Caco-2 (cell line): ENCODE measurements at regions of chr5 and their contacts with region 1.

Region 1: DNA sequence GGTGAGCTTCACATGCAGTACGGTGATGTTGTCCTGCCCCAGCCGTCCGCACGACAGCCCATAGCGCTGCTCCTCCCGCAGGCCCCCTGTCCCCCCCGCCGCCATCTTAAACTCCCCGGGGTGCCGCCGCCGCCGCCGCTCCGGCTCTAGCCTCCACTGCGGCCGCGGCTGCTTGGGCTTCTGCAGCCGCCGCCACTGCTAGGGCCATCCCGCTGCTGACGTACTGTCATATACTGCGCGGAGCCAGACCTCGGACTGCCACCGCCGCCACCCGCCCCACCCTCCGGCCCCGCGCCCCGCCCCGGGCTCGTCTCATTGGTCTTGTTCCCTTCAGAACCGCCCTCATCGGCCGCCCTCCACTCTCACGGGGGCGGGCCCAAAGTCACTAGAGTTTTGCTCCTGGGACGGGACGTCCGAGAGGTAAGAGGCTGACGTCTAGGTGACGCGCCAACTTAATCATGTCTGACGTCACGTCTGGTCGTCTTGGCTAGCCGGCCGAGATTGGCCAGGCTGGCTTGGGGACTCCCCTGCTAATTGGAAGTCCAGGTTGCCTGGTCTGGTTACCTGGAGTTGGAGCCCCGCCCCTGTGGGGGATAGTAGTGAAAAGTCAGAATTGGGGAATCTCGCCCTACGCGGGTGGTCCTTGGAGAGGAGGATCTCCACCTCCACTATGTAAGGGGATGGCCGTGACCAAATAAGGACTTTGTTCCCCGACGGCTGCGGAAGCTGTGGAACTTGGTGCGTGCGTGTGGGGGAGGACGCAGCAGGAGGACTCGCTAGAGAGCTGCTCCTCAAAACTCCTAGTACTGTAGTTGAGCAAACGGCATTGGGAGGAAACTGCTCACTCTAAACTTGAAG is at the start of gene ELL2:
- DNase-seq: peak; percentile 99 to 100
- H3K4me3 ChIP-seq: peak within 1 kb of the TSS; percentile 99
- H3K4me3 Mint-ChIP-seq: peak within 1 kb of the TSS; percentile 86
- H3K27ac Mint-ChIP-seq: peak within 1 kb of the TSS; percentile 98
- H3K4me1 ChIP-seq: peaks cover 48% of the 10 kb centered on the region
- H3K4me1 Mint-ChIP-seq: peaks cover 37% of the 10 kb centered on the region
- H3K27me3 ChIP-seq: no peaks in the 10 kb centered on the region
- H3K27me3 Mint-ChIP-seq: no peaks in the 10 kb centered on the region
- CTCF ChIP-seq: no peak
- total RNA-seq, gene ELL2: 78.1 and 81.0 TPM in 2 replicates

Region 2: GRCh38 chr5:95646554-95647431 is 315.1 kb before region 1 on chr5 and contains the start of gene RFESD:
- CTCF ChIA-PET with region 1: no interaction called
- POLR2A ChIA-PET with region 1: no interaction called
- intact Hi-C with region 1: loop called (anchors 1 kb)
- DNase-seq: peak; percentile 99
- H3K4me3 ChIP-seq: peak within 1 kb of the TSS; percentile 27
- H3K4me3 Mint-ChIP-seq: peak within 1 kb of the TSS; percentile 82
- H3K27ac Mint-ChIP-seq: peak within 1 kb of the TSS; percentile 89
- H3K4me1 ChIP-seq: peaks cover 8% of the 10 kb centered on the region; the same call in 1 of the 2 replicates
- H3K4me1 Mint-ChIP-seq: peaks cover 7% of the 10 kb centered on the region
- H3K27me3 ChIP-seq: no peaks in the 10 kb centered on the region
- H3K27me3 Mint-ChIP-seq: no peaks in the 10 kb centered on the region
- CTCF ChIP-seq: peak; percentile 12 to 45
- total RNA-seq, gene RFESD: 1.6 and 2.4 TPM in 2 replicates

Region 3: GRCh38 chr5:95892780-95893354 is 69.0 kb before region 1 on chr5:
- CTCF ChIA-PET with region 1: interaction called, 3 read pairs
- POLR2A ChIA-PET with region 1: no interaction called
- intact Hi-C with region 1: loop called (anchors 2 kb)
- DNase-seq: peak; percentile 65 to 72
- H3K4me3 ChIP-seq: no peak overlapping the region
- H3K4me3 Mint-ChIP-seq: no peak overlapping the region
- H3K27ac Mint-ChIP-seq: no peak overlapping the region
- H3K4me1 ChIP-seq: peaks cover 5% of the 10 kb centered on the region
- H3K4me1 Mint-ChIP-seq: peaks cover 4% of the 10 kb centered on the region
- H3K27me3 ChIP-seq: no peaks in the 10 kb centered on the region
- H3K27me3 Mint-ChIP-seq: no peaks in the 10 kb centered on the region
- CTCF ChIP-seq: peak; percentile 61 to 75

Region 4: DNA sequence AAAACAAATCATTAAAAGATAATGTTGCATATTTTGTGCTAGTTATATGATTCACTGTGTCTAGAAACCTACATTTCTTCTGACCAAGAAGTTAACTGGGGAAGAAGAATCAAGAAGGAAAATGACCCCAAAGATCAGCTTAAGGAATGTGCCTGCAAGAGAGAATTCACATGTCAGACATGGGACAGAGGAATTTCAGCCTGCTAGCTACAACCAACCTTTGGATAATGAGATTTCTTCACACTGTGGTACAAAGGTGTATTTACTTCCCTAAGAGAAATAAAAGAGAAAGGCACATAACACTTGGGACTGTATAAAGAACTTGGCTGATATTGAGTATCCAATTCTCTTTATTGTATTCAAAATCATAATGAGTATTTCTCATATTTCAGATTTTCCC is 39.4 kb after region 1 on chr5:
- CTCF ChIA-PET with region 1: no interaction called
- POLR2A ChIA-PET with region 1: interaction called, 3 read pairs
- intact Hi-C with region 1: loop called (anchors 1 kb)
- DNase-seq: peak in 1 of 2 experiments; percentile 60
- H3K4me3 ChIP-seq: no peak overlapping the region
- H3K4me3 Mint-ChIP-seq: no peak overlapping the region
- H3K27ac Mint-ChIP-seq: no peak overlapping the region
- H3K4me1 ChIP-seq: peaks cover 36% of the 10 kb centered on the region
- H3K4me1 Mint-ChIP-seq: peaks cover 24% of the 10 kb centered on the region
- H3K27me3 ChIP-seq: no peaks in the 10 kb centered on the region
- H3K27me3 Mint-ChIP-seq: no peaks in the 10 kb centered on the region
- CTCF ChIP-seq: no peak

Region 5: GRCh38 chr5:96113170-96113939 is 151.5 kb after region 1 on chr5:
- CTCF ChIA-PET with region 1: no interaction called
- POLR2A ChIA-PET with region 1: no interaction called
- intact Hi-C with region 1: loop called (anchors 5 kb)
- DNase-seq: no peak
- H3K4me3 ChIP-seq: no peak overlapping the region
- H3K4me3 Mint-ChIP-seq: no peak overlapping the region
- H3K27ac Mint-ChIP-seq: no peak overlapping the region
- H3K4me1 ChIP-seq: peaks cover 34% of the 10 kb centered on the region
- H3K4me1 Mint-ChIP-seq: peaks cover 23% of the 10 kb centered on the region
- H3K27me3 ChIP-seq: no peaks in the 10 kb centered on the region
- H3K27me3 Mint-ChIP-seq: no peaks in the 10 kb centered on the region
- CTCF ChIP-seq: no peak

Region 6: GRCh38 chr5:96172436-96172835 is 210.6 kb after region 1 on chr5:
- CTCF ChIA-PET with region 1: no interaction called
- POLR2A ChIA-PET with region 1: no interaction called
- intact Hi-C with region 1: no loop called
- DNase-seq: no peak
- H3K4me3 ChIP-seq: no peak overlapping the region
- H3K4me3 Mint-ChIP-seq: no peak overlapping the region
- H3K27ac Mint-ChIP-seq: no peak overlapping the region
- H3K4me1 ChIP-seq: peaks cover 8% of the 10 kb centered on the region
- H3K4me1 Mint-ChIP-seq: peaks cover 7% of the 10 kb centered on the region
- H3K27me3 ChIP-seq: no peaks in the 10 kb centered on the region
- H3K27me3 Mint-ChIP-seq: no peaks in the 10 kb centered on the region
- CTCF ChIP-seq: no peak

Region 7: DNA sequence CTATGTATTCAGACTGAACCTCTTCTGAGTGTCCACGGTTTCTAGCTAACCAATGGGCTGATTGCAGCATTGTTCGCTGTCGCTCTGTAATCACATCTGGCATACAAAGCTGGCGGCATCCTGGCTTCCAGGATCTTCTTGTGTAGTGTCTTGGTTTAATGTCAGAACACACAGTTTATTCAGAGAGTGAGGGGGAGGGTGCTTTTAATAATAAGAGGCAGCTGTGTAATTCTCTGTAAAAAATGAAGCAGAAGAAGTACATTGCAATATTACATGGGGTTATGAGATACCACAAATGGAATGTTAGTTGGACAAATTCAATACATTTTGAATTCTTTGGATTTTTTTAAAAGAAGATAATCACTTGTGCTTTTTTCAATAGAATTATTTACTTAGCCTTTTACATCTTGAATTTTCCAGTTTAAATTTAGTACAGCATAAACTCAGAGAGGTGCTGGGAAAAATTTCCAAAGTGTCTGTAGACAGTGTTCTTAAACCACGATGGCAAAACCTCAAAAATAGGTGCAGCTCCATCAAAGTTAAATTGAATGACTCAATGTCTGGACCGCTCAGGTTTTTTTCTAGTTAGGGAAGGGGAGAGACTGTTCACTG is 265.2 kb after region 1 on chr5:
- CTCF ChIA-PET with region 1: no interaction called
- POLR2A ChIA-PET with region 1: no interaction called
- intact Hi-C with region 1: no loop called
- DNase-seq: no peak
- H3K4me3 ChIP-seq: no peak overlapping the region
- H3K4me3 Mint-ChIP-seq: no peak overlapping the region
- H3K27ac Mint-ChIP-seq: peak overlapping the region; percentile 30
- H3K4me1 ChIP-seq: peaks cover 9% of the 10 kb centered on the region; the same call in 1 of the 2 replicates
- H3K4me1 Mint-ChIP-seq: peaks cover 13% of the 10 kb centered on the region
- H3K27me3 ChIP-seq: no peaks in the 10 kb centered on the region
- H3K27me3 Mint-ChIP-seq: no peaks in the 10 kb centered on the region
- CTCF ChIP-seq: no peak

Region 8: GRCh38 chr5:96336351-96336985 is 374.6 kb after region 1 on chr5:
- CTCF ChIA-PET with region 1: interaction called, 14 read pairs
- POLR2A ChIA-PET with region 1: no interaction called
- intact Hi-C with region 1: loop called (anchors 1 kb)
- DNase-seq: peak; percentile 78 to 79
- H3K4me3 ChIP-seq: no peak overlapping the region
- H3K4me3 Mint-ChIP-seq: no peak overlapping the region
- H3K27ac Mint-ChIP-seq: no peak overlapping the region
- H3K4me1 ChIP-seq: peaks cover 40% of the 10 kb centered on the region
- H3K4me1 Mint-ChIP-seq: peaks cover 39% of the 10 kb centered on the region
- H3K27me3 ChIP-seq: no peaks in the 10 kb centered on the region
- H3K27me3 Mint-ChIP-seq: no peaks in the 10 kb centered on the region
- CTCF ChIP-seq: peak; percentile 84 to 93